HAP-1 (cell line): ENCODE measurements at regions of chr20 and their contacts with region 1.

Region 1: DNA sequence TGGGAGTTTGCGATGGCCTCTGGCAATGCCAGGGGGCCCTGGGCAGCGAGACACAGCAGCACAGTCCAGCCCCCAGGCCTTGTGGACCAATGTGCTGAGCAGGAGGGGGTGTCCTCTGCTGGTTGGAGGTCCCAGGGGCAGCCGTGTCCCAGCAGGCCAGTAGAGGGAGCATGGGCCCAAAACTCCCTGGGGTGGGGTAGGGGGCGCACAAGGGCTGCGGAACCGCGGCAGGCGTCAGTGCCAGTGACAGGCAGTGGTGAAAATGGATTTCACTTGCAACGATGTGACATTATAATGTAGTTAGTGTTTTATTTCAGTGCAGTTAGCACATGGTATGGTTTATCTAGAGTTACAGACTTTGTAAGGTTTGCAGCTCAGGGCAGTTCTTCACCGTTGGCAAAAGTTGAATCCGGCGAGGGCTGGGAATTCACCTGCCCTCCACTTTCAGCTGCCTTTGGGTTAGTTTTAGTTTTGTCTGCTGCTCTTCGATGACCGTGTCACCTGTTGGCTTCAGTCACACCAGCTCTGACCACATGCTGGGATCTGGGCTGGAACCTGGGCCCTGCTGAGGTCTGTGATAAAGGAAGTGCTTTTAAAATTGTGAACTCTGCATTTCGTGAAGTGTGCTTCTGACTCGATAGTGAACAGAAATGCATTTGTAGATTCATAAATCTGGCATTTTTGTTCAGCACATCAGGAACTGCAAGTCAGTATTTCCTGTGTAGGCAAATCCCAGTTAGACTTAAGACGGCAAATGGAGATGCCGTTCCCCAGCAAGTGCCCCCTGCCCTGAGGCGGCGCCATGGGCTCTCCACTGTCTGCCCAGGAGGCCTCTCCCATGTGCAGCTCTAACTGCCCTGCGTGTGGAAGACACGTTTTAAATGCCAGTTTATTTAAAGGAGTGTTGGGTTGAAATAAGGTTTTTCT is 46.8 kb downstream of the PYGB start:
- DNase-seq: peak; percentile 61 to 86
- H3K4me3 ChIP-seq: no peak overlapping the region
- H3K4me1 ChIP-seq: no peaks in the 10 kb centered on the region
- H3K27me3 ChIP-seq: no peaks in the 10 kb centered on the region

Region 2: GRCh38 chr20:25399037-25399430 is 104.3 kb after region 1 on chr20:
- in situ Hi-C with region 1: loop called (anchors 5 kb)
- DNase-seq: peak; percentile 62 to 85
- H3K4me3 ChIP-seq: no peak overlapping the region
- H3K4me1 ChIP-seq: peaks cover 20% of the 10 kb centered on the region
- H3K27me3 ChIP-seq: no peaks in the 10 kb centered on the region